Colonic mucosa (tissue), 4 donors: ENCODE measurements at regions of chr5 and their contacts with region 1.

Region 1: DNA sequence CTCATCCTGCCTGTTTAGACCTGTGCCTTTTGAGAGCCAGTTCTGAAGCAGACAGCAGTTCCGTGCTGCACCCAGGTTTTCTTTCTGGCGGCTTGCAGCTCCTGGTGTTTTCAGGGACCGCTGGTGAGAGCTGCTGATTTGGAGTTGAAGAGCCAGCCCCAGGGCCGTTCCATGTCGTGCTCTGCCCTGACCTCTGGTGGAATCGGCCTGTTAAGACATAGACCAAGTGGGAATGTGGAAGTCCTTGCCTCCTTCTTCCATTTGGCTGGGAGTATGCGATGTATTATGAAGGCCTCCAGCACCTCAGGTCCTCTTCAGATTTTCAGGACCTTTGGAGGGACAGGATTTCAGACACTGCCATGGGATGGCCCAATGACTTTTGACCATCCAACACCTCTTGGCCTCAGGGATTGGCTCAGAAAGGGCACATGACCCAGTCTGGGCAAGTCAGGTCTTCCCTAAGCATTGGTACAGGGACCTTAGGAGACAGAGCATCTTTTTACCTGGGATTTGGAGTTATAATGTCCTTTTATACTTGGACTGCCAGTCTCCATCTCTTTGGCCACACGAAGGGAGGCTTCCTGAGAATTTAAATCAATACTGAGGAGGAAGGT is 136.1 kb upstream of the CLINT1 start:
- DNase-seq: peak; percentile 78
- H3K4me3 ChIP-seq: no peak overlapping the region
- H3K27ac ChIP-seq: no peak overlapping the region
- H3K4me1 ChIP-seq: no peaks in the 10 kb centered on the region
- H3K27me3 ChIP-seq: no peaks in the 10 kb centered on the region
- CTCF ChIP-seq: peak; percentile 67

Region 2: GRCh38 chr5:157748760-157749461 is 246.1 kb before region 1 on chr5:
- intact Hi-C with region 1: no loop called
- DNase-seq: no peak
- H3K4me3 ChIP-seq: no peak overlapping the region
- H3K27ac ChIP-seq: no peak overlapping the region
- H3K4me1 ChIP-seq: peaks cover 5% of the 10 kb centered on the region
- H3K27me3 ChIP-seq: no peaks in the 10 kb centered on the region
- CTCF ChIP-seq: no peak

Region 3: DNA sequence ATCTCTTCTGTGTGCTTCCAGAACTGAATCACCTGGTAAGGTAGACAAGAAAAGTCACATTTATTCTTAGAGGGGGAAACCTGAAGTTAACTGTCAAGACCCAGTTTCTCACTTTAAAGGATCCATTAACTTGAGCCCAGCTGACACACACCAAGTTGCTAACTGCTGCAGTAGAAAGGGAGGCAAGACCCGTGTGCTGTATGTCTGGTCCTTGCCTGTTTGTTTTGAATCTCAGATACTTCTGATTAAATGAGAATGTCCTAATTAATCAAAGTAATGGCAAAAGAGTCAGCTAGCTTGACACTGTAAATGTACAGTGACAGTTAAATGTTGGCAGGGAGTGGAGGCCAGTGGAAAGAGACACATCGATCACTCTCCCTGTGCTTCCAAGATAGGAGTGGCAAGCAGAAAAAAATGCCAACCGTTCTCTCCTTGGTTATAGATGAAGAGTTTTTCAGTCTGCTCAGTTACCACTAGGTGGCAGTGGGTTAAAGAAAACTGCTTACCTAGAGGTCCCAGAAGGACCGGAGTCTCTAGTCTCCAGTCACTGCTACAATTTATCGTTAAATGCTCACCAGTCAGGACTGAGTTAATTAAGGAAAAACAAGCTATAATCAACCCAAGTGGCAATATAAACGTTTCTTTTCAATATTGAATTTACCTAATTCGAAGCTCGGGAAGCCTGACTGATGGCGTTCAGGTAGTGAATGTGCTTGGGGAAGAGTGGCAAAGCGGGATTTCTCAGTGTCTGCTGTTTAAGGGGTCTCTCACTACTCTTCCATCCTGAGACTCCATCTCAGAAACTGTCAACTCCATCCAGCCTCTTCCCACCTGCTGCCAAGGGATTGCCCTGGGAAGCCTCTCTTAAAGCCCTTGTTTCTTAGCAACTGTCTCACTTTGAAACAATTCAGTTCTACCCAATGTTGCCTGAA is 233.1 kb before region 1 on chr5:
- intact Hi-C with region 1: loop called (anchors 2 kb)
- DNase-seq: peak; percentile 39
- H3K4me3 ChIP-seq: no peak overlapping the region
- H3K27ac ChIP-seq: no peak overlapping the region
- H3K4me1 ChIP-seq: no peaks in the 10 kb centered on the region
- H3K27me3 ChIP-seq: no peaks in the 10 kb centered on the region
- CTCF ChIP-seq: peak; percentile 73

Region 4: GRCh38 chr5:157816682-157817386 is 178.2 kb before region 1 on chr5:
- intact Hi-C with region 1: loop called (anchors 5 kb)
- DNase-seq: no peak
- H3K4me3 ChIP-seq: no peak overlapping the region
- H3K27ac ChIP-seq: no peak overlapping the region
- H3K4me1 ChIP-seq: no peaks in the 10 kb centered on the region
- H3K27me3 ChIP-seq: no peaks in the 10 kb centered on the region
- CTCF ChIP-seq: peak; percentile 47